ENCODE measurements at regions of chr1 and their contacts with region 1.

Region 1: GRCh38 chr1:56837244-56837939 is 17.2 kb upstream of the C8A start:
- DNase-seq: no peak
- ATAC-seq: no peak

Region 2: GRCh38 chr1:56977910-56978309 is 140.5 kb after region 1 on chr1:
- intact Hi-C with region 1: loop called in 1 of 2 experiments (anchors 5 kb)
- DNase-seq: no peak
- ATAC-seq: no peak